Activated B cell treated with CpG ODN at 0.5 μM for 24 hours (primary cell): ENCODE measurements at regions of chr2 and their contacts with region 1.

Region 1: DNA sequence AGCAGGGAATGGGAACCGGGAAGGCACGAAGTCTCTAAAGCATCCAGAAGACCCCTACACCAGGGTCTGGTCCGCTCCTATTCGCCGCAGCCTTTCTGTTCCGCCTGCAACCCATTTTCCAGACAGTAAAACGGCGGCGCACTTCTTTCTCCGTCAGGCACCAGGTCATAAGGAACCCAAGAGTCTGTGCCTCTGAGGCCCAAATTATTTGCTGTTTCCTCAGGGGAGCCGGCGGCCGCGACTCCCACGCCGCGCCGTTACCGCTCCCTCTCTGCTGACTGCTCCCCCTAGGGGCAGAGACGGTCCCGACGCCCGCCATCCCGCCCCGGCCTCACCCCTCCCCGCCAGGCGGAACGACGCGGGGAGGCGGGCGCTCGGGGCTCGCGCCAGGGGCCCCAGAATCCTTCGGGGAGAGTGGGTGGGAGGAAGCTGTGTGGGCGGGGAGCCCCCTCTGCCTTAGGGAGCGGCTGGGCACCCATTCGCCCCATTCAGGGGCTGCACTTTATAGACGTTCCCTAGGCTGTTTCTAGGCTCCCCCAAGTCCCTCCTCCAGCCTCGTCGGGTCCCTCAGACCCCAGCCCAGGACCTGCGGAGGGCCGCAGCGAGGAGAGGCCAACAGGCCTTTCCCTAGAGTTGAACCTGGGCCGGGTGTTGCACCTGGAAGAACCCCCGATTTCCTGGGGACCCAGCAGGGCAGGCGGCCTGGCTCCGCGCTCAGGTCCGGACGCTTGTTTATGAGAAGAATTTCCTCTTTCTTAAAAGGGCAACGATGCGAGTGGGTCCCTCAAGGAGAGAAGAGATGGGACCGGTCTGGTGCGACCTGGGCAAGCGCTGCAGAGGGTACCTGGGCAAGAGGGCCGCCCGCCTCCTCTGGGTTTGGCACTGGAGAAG is 3.6 kb upstream of the CTDSP1 start:
- DNase-seq: peak; percentile 88
- ATAC-seq: peak; percentile 70
- H3K4me3 Mint-ChIP-seq: peak overlapping the region; percentile 92
- H3K27ac Mint-ChIP-seq: peak overlapping the region; percentile 96
- H3K4me1 Mint-ChIP-seq: peaks cover 51% of the 10 kb centered on the region
- H3K27me3 Mint-ChIP-seq: no peaks in the 10 kb centered on the region
- CTCF ChIP-seq: peak; percentile 44

Region 2: DNA sequence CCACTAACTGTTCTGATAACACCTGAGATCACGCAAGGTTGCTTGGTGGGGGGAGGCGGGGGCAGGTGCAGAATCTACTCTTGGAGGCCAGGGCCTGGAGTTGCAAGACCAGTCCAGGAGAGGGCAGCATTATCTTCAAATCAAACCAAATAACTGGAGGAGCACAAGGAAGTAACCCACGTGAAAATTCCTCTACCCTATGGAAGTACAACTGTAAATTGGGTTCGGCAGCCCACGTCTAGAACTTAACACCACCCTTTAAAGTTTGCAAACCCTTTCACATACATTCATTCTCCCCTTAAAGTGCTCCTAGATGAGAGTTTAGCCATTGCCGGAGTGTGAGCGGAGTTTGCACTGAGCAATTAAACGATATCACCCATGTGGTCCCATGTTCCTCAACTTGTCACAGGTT is 209.7 kb before region 1 on chr2:
- CTCF ChIA-PET with region 1: no interaction called
- POLR2A ChIA-PET with region 1: no interaction called
- intact Hi-C with region 1: loop called (anchors 1 kb)
- DNase-seq: peak; percentile 43
- ATAC-seq: peak; percentile 99
- H3K4me3 Mint-ChIP-seq: no peak overlapping the region
- H3K27ac Mint-ChIP-seq: no peak overlapping the region
- H3K4me1 Mint-ChIP-seq: peaks cover 7% of the 10 kb centered on the region
- H3K27me3 Mint-ChIP-seq: peaks cover 1% of the 10 kb centered on the region
- CTCF ChIP-seq: peak; percentile 3

Region 3: DNA sequence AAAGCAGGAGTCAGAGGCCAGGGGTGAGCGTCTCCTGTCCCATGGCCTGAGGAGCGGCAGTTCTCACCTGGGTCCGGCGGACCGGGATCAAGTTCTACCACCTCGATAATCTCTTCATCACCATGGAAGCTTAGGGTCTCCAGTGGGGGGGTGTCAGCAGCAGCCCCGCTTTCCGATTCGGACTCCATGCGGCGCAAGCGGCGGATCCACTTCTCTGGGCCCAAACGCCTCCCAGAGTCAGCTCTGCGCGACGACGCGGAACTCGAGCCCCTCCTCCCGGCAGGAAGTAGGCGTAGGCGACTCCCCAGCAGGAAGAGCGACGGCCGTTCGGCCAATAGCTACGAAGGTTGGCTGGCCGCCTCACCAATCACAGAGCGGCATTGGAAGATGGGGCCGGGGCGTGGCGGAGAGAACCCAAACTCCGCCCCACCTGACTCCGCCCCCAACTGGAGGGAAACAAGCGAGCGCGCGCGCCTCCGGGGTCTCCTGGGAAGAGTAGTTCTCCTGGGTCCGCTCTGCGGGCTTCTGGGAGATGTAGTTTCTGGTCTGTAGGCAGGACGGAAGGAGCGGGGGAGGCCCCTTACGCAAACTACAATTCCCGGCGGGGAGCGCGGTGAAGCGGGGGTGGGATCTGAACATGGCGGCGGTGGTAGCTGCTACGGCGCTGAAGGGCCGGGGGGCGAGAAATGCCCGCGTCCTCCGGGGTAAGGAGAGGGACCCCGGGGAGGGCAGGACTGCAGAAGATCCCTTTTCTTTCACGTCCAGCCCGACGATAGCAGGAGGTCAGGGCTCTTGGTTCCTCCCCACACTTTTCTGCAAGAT is 125.9 kb before region 1 on chr2 and contains the starts of genes AAMP and PNKD:
- CTCF ChIA-PET with region 1: interaction called, 14 read pairs
- POLR2A ChIA-PET with region 1: interaction called, 12 read pairs
- intact Hi-C with region 1: loop called (anchors 1 kb)
- DNase-seq: peak; percentile 100
- ATAC-seq: peak; percentile 83
- H3K4me3 Mint-ChIP-seq: peak within 1 kb of the TSS; percentile 93
- H3K27ac Mint-ChIP-seq: peak within 1 kb of the TSS; percentile 88
- H3K4me1 Mint-ChIP-seq: peaks cover 67% of the 10 kb centered on the region
- H3K27me3 Mint-ChIP-seq: no peaks in the 10 kb centered on the region
- CTCF ChIP-seq: no peak
- total RNA-seq, gene AAMP: 63.4 and 63.6 TPM in 2 replicates
- total RNA-seq, gene PNKD: 21.0 and 23.7 TPM in 2 replicates

Region 4: GRCh38 chr2:218301176-218301819 is 94.7 kb before region 1 on chr2:
- CTCF ChIA-PET with region 1: interaction called, 20 read pairs
- POLR2A ChIA-PET with region 1: interaction called, 8 read pairs
- intact Hi-C with region 1: loop called (anchors 1 kb)
- DNase-seq: peak; percentile 61
- ATAC-seq: peak; percentile 99
- H3K4me3 Mint-ChIP-seq: no peak overlapping the region
- H3K27ac Mint-ChIP-seq: peak overlapping the region; percentile 53
- H3K4me1 Mint-ChIP-seq: peaks cover 8% of the 10 kb centered on the region
- H3K27me3 Mint-ChIP-seq: no peaks in the 10 kb centered on the region
- CTCF ChIP-seq: no peak

Region 5: GRCh38 chr2:218367415-218368153 is 28.5 kb before region 1 on chr2:
- CTCF ChIA-PET with region 1: interaction called, 4 read pairs
- POLR2A ChIA-PET with region 1: interaction called, 7 read pairs
- intact Hi-C with region 1: loop called (anchors 1 kb)
- DNase-seq: peak; percentile 74
- ATAC-seq: peak; percentile 86
- H3K4me3 Mint-ChIP-seq: peak overlapping the region; percentile 85
- H3K27ac Mint-ChIP-seq: peak overlapping the region; percentile 84
- H3K4me1 Mint-ChIP-seq: peaks cover 36% of the 10 kb centered on the region
- H3K27me3 Mint-ChIP-seq: no peaks in the 10 kb centered on the region
- CTCF ChIP-seq: no peak

Region 6: DNA sequence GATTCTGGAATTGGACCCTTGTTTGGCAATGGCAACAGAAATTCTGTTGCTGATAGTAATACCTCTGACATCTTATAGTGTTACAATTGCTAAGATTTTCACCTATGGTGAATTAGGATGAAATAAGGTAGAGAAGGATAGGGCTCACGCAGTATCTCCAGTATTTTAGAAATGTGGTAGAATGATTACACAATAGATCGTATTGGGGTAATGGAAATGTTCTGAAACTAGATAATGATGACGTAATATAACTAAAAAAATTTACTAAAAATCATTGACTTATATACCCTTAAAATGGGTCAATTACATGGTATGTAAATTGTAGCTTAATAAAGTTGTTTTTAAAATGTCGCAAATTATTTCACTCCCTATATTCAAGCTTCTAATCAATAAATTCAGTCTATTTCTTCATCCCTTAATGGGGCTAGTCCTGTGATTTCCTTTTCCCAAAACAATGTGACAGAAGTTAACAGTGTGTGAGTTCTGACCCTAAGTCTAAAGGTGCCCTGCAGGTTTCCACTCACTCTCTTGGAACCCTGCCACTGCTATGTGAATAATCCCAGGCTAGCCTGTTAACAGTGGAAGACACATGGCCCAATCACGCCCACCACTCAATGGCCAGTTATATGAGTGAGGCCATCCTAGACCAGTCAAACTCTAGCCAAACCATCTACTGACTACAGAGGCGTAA is 140.9 kb after region 1 on chr2:
- CTCF ChIA-PET with region 1: no interaction called
- POLR2A ChIA-PET with region 1: no interaction called
- intact Hi-C with region 1: no loop called
- DNase-seq: no peak
- ATAC-seq: no peak
- H3K4me3 Mint-ChIP-seq: no peak overlapping the region
- H3K27ac Mint-ChIP-seq: no peak overlapping the region
- H3K4me1 Mint-ChIP-seq: no peaks in the 10 kb centered on the region
- H3K27me3 Mint-ChIP-seq: no peaks in the 10 kb centered on the region
- CTCF ChIP-seq: no peak

Region 7: GRCh38 chr2:218568190-218569037 is 172.4 kb after region 1 on chr2 and contains the starts of genes CNOT9 and USP37:
- CTCF ChIA-PET with region 1: no interaction called
- POLR2A ChIA-PET with region 1: interaction called, 5 read pairs
- intact Hi-C with region 1: loop called (anchors 1 kb)
- DNase-seq: peak; percentile 100
- ATAC-seq: peak; percentile 92
- H3K4me3 Mint-ChIP-seq: peak within 1 kb of the TSS; percentile 97
- H3K27ac Mint-ChIP-seq: peak within 1 kb of the TSS; percentile 99
- H3K4me1 Mint-ChIP-seq: peaks cover 45% of the 10 kb centered on the region
- H3K27me3 Mint-ChIP-seq: no peaks in the 10 kb centered on the region
- CTCF ChIP-seq: no peak
- total RNA-seq, gene CNOT9: 60.5 and 74.4 TPM in 2 replicates
- total RNA-seq, gene USP37: 14.3 and 23.1 TPM in 2 replicates

Region 8: DNA sequence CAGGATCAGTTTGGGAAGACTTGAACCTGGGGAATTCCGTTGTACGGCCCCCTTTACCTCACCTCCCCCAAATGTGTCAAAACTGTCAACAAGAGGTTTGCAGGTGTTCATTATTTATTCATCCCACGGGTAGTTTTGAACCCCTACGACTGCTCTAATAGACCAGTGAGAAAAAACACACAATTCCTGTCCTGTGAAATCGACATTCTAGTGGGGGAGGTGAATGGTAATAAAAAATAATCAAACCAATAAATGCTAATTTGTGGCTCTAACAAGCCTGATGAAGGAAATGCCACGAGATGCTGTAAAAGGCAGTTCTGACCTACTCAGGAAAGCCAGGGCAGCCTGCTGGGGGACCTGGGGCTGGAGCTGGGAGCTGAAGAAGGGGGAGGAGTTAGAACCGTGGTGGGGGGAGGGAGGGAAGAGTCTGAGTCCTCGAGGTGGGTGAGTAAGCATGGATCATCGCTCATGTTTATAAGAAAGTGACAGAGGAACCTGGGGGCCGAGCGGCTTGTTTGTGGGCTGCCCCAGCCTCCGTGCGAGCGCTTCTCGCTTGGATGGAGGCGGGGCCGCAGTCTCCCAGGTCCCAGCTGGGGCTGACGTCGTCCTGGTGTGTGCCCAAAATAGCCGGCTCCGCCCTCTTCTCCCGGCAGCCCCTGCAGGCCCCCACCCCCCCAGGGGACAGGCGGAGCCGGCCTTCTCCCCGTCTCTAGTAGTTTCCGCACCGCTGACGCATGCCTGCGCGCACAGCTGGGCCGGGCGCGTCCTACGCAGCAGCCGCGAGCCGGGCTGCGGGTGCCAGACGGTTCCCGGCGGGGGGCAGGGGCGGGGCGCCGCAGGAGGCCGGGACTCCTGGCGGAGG is 882.8 kb after region 1 on chr2 and contains the start of gene DNAJB2:
- CTCF ChIA-PET with region 1: no interaction called
- POLR2A ChIA-PET with region 1: no interaction called
- intact Hi-C with region 1: loop called (anchors 1 kb)
- DNase-seq: peak; percentile 99
- ATAC-seq: peak; percentile 78
- H3K4me3 Mint-ChIP-seq: peak within 1 kb of the TSS; percentile 89
- H3K27ac Mint-ChIP-seq: peak within 1 kb of the TSS; percentile 97
- H3K4me1 Mint-ChIP-seq: peaks cover 49% of the 10 kb centered on the region
- H3K27me3 Mint-ChIP-seq: no peaks in the 10 kb centered on the region
- CTCF ChIP-seq: no peak
- total RNA-seq, gene DNAJB2: 59.0 and 71.1 TPM in 2 replicates

Region 9: DNA sequence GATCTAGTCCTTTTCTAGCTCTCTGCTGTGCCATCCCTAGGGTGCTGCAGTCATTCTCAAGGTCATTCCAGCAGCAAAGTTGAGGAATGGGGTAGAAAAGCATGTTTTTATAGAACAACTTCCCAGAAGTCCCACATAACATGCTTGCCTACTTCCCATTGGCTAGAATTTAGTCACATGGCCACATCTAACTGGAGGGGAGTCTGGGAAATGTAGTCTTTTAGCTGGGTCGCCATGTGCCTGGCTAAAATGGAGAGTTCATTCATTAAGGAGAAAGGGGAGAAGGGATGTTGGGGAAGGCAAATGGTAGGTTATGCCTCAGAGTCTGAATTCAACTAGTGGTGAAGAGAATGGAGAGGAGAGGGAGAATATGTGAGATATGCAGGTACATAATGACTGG is 1317.1 kb after region 1 on chr2:
- CTCF ChIA-PET with region 1: no interaction called
- POLR2A ChIA-PET with region 1: no interaction called
- intact Hi-C with region 1: no loop called
- DNase-seq: no peak
- ATAC-seq: no peak
- H3K4me3 Mint-ChIP-seq: no peak overlapping the region
- H3K27ac Mint-ChIP-seq: no peak overlapping the region
- H3K4me1 Mint-ChIP-seq: no peaks in the 10 kb centered on the region
- H3K27me3 Mint-ChIP-seq: peaks cover 7% of the 10 kb centered on the region
- CTCF ChIP-seq: no peak